ENCODE measurements at regions of chr14 and their contacts with region 1.

Region 1: DNA sequence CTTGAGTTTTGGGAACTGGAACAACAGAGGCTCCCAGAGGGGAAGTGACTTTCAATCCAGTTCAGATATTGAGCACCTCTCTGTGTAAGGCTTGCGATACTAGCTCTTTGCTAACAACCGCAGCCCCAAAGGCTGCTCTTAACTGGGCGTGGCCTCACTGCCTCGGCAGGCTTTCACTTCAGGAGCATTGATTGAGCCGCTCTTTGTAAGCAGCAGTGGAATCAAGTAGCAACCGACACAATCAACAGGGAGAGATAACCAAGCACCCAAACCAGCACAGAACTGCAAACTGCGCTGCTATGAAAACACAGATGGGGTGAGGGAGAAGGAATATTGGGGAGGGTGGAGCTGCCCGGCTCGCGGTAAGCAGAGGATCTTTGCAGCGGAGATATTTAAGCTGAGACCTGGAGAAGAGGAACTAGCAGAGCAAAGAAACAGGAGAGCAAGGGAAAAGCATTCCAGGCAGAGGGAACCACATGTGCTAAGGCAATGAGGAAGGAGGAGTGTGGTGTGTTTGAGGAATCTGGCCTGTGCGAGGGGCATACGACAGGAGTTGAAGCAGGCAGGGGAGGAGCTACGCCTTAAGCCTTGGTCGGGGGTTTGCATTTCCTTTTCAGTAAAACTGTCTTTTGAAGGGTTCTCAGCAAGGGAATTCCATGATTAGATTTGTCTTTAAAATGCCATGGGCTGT is 17.3 kb upstream of the YY1 start:
- DNase-seq: peak in 1 of 2 experiments; percentile 67
- H3K4me3 ChIP-seq: peak overlapping the region; percentile 32 to 62 (median 46); a peak in 7 of 8 replicates
- H3K27ac ChIP-seq: peak overlapping the region; percentile 78
- H3K4me1 ChIP-seq: peaks cover 17 to 34% (median 23%) of the 10 kb centered on the region in 4 experiments
- H3K27me3 ChIP-seq: no peaks in the 10 kb centered on the region
- CTCF ChIP-seq: no peak
- EP300 ChIP-seq: no peak
- POLR2A ChIP-seq: 0 out of 3 replicates have a peak, but pooled peaks of 1 of the 2 experiments have one; percentile 36
- RAD21 ChIP-seq: no peak

Region 2: GRCh38 chr14:100234511-100234910 is 12.8 kb after region 1 on chr14:
- CTCF ChIA-PET with region 1: interaction called, 13 read pairs
- POLR2A ChIA-PET with region 1: interaction called, 90 read pairs
- DNase-seq: no peak
- H3K4me3 ChIP-seq: no peak overlapping the region
- H3K27ac ChIP-seq: no peak overlapping the region
- H3K4me1 ChIP-seq: peaks cover 0 to 8% (median 4%) of the 10 kb centered on the region in 4 experiments; a peak in 3 of 7 replicates
- H3K27me3 ChIP-seq: no peaks in the 10 kb centered on the region
- CTCF ChIP-seq: no peak
- EP300 ChIP-seq: no peak
- POLR2A ChIP-seq: no peak
- RAD21 ChIP-seq: no peak

Region 3: DNA sequence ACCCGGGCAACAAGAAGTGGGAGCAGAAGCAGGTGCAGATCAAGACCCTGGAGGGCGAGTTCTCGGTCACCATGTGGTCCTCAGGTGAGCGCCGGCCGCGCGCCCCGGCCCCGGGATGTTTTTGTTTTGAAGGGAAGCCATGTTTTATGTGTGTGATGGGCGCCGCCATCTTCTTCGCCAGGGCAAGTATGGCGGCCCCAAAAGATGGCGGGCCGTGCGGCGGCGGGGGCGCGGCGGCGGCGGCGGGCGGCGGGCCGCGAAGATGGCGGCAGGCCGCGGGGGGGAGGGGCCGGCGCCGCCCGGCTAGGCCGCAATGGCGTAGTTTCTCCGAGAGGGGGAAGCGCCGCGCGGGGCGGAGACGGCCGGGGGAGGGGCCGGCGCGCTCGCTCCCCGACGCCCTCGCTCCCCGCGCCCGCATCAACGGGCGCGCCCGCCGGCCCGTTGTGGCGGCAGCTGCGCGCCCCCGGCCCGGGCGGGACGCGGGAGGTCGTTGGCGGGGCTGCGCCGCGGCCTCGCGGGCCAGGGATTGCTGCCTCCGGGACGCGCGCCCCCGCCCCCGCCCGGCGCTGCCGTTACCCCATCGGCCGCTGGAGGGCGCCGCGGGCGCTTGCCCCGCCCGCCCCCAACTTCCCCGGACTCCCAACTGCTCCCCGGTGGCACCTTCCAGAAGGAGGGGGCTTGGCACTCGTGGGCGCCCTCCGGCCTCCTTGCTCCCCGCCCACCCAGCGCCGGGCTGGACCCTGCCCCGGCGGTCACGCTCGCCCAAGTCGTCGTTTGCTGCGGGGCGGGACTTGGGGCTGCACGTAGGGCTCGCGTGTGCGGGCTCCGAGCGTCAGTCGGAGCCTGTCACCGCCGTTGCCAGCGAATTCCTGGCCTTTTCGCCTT is 18.4 kb after region 1 on chr14:
- CTCF ChIA-PET with region 1: interaction called, 13 read pairs
- POLR2A ChIA-PET with region 1: interaction called, 90 read pairs
- DNase-seq: peak in 1 of 2 experiments; percentile 79
- H3K4me3 ChIP-seq: peak overlapping the region; percentile 87 to 100 (median 94)
- H3K27ac ChIP-seq: peak overlapping the region; percentile 82; the same call in 1 of the 2 replicates
- H3K4me1 ChIP-seq: peaks cover 2 to 14% (median 5%) of the 10 kb centered on the region in 4 experiments; a peak in 3 of 7 replicates
- H3K27me3 ChIP-seq: no peaks in the 10 kb centered on the region
- CTCF ChIP-seq: peak; percentile 41 to 73 (median 67)
- EP300 ChIP-seq: no peak
- POLR2A ChIP-seq: peak in 1 of 2 experiments; percentile 22; a peak in 1 of 3 replicates
- RAD21 ChIP-seq: peak in 1 of 2 experiments; percentile 31; a peak in 1 of 4 replicates

Region 4: GRCh38 chr14:100263144-100263543 is 41.5 kb after region 1 on chr14:
- CTCF ChIA-PET with region 1: no interaction called
- POLR2A ChIA-PET with region 1: no interaction called
- DNase-seq: no peak
- H3K4me3 ChIP-seq: no peak overlapping the region
- H3K27ac ChIP-seq: no peak overlapping the region
- H3K4me1 ChIP-seq: peaks cover 0 to 4% (median 0%) of the 10 kb centered on the region in 4 experiments; a peak in 1 of 7 replicates
- H3K27me3 ChIP-seq: no peaks in the 10 kb centered on the region
- CTCF ChIP-seq: no peak
- EP300 ChIP-seq: no peak
- POLR2A ChIP-seq: no peak
- RAD21 ChIP-seq: no peak

Measured in H1 (cell line).